OCI-LY7 (cell line): ENCODE measurements at regions of chrX and their contacts with region 1.

Region 1: GRCh38 chrX:102863735-102864134 is 73.3 kb upstream of the RAB40AL start:
- DNase-seq: peak; percentile 56
- H3K4me3 ChIP-seq: no peak overlapping the region
- H3K27ac ChIP-seq: no peak overlapping the region
- H3K4me1 ChIP-seq: no peaks in the 10 kb centered on the region
- CTCF ChIP-seq: peak; percentile 84

Region 2: GRCh38 chrX:102643275-102643674 is 220.5 kb before region 1 on chrX:
- CTCF ChIA-PET with region 1: no interaction called
- POLR2A ChIA-PET with region 1: no interaction called
- intact Hi-C with region 1: loop called (anchors 10 kb)
- DNase-seq: no peak
- H3K4me3 ChIP-seq: no peak overlapping the region
- H3K27ac ChIP-seq: no peak overlapping the region
- H3K4me1 ChIP-seq: no peaks in the 10 kb centered on the region
- CTCF ChIP-seq: no peak

Region 3: GRCh38 chrX:102883176-102883915 is 19.6 kb after region 1 on chrX:
- CTCF ChIA-PET with region 1: no interaction called
- POLR2A ChIA-PET with region 1: no interaction called
- intact Hi-C with region 1: no loop called
- DNase-seq: no peak
- H3K4me3 ChIP-seq: no peak overlapping the region
- H3K27ac ChIP-seq: no peak overlapping the region
- H3K4me1 ChIP-seq: no peaks in the 10 kb centered on the region
- CTCF ChIP-seq: no peak

Region 4: GRCh38 chrX:103017542-103017941 is 153.8 kb after region 1 on chrX:
- CTCF ChIA-PET with region 1: no interaction called
- POLR2A ChIA-PET with region 1: no interaction called
- intact Hi-C with region 1: no loop called
- DNase-seq: no peak
- H3K4me3 ChIP-seq: no peak overlapping the region
- H3K27ac ChIP-seq: no peak overlapping the region
- H3K4me1 ChIP-seq: no peaks in the 10 kb centered on the region
- CTCF ChIP-seq: no peak